MCF 10A (cell line): ENCODE measurements at regions of chr19 and their contacts with region 1.

Region 1: GRCh38 chr19:3970808-3971598 is at the start of gene DAPK3:
- DNase-seq: peak; percentile 99
- H3K4me3 Mint-ChIP-seq: peak within 1 kb of the TSS; percentile 72
- H3K27ac Mint-ChIP-seq: peak within 1 kb of the TSS; percentile 88
- H3K4me1 Mint-ChIP-seq: peaks cover 18% of the 10 kb centered on the region
- H3K27me3 Mint-ChIP-seq: no peaks in the 10 kb centered on the region
- CTCF ChIP-seq: no peak
- total RNA-seq, gene DAPK3: 60.9 and 61.2 TPM in 2 replicates

Region 2: DNA sequence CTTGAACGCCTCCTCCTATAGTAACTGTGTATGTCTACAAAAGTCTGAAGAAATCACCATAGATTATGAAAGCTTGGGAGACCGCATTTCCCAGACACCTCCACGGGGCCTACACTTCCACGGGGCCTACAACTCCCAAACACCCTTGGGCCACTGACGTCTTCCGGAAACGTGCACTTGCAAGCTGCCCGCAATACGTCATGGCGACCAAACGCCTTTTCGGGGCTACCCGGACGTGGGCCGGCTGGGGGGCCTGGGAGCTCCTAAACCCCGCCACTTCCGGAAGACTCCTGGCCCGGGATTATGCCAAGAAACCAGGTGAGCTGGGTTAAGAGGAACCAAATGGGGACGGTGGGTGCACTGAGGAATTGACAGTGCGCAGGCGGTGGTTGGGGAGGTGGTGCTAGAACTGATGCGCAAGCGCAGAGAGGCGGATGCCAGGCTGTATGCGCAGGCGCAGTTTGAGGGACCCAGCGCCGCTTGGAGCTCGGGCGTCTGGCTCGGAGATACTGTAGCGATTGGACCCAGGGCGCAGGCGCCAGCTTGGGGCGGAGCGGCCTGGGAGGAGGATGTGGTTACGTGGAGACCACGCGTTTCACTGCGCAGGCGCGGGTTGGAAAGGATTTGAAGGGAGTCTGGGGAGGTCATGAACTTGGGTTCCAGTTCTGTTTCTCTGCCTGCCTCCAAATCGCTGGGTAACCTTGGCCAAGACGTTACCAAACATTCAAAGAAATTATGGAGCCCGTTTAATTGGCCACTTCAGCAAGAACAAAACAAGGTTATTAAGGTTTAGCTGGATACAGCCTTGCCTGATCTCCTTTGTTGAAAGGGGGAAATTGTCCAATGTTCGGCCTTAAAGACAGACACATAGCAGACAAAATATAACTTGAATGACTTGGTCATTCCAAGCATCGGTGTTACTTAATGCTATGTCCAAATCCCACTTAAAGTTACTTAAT is 208.2 kb before region 1 on chr19 and contains the start of gene MRPL54:
- CTCF ChIA-PET with region 1: interaction called, 11 read pairs
- POLR2A ChIA-PET with region 1: interaction called, 33 read pairs
- intact Hi-C with region 1: no loop called
- DNase-seq: peak; percentile 100
- H3K4me3 Mint-ChIP-seq: peak within 1 kb of the TSS; percentile 92
- H3K27ac Mint-ChIP-seq: peak within 1 kb of the TSS; percentile 98
- H3K4me1 Mint-ChIP-seq: peaks cover 6% of the 10 kb centered on the region
- H3K27me3 Mint-ChIP-seq: no peaks in the 10 kb centered on the region
- CTCF ChIP-seq: no peak
- total RNA-seq, gene MRPL54: 85.0 and 85.7 TPM in 2 replicates

Region 3: DNA sequence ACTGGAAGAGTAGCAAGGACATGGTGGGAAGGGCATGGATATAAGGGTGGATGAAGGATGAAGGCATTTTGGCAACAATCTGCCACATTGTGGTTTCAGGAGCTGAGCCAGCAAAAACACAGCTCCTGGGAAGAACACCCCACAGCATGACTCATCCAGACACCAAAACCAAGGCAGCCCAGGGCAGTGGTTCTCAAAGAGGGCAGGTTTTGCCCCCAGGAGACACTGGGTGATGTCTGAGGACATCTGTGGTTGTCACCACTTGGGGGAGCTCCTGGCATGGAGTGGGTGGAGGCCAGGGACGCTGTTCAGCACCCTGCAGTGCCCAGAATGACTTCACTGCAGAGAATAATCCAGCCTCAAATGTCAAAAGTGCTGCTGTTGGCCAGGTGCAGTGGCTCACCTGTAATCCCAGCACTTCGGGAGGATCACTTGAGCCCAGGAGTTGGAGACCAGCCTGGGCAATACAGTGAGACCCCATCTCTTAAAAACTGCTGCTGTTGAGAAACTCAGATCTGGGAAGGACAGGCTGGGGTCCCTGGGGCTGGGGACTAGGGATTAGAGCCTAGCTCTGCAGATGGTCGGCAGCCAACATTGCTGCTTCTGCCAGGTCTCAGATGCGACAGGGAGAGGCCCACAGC is 118.3 kb before region 1 on chr19:
- CTCF ChIA-PET with region 1: interaction called, 14 read pairs
- POLR2A ChIA-PET with region 1: interaction called, 7 read pairs
- intact Hi-C with region 1: loop called (anchors 2 kb)
- DNase-seq: peak; percentile 99
- H3K4me3 Mint-ChIP-seq: no peak overlapping the region
- H3K27ac Mint-ChIP-seq: no peak overlapping the region
- H3K4me1 Mint-ChIP-seq: peaks cover 9% of the 10 kb centered on the region
- H3K27me3 Mint-ChIP-seq: peaks cover 53% of the 10 kb centered on the region
- CTCF ChIP-seq: peak; percentile 62

Region 4: GRCh38 chr19:3907626-3908265 is 63.3 kb before region 1 on chr19:
- CTCF ChIA-PET with region 1: no interaction called
- POLR2A ChIA-PET with region 1: no interaction called
- intact Hi-C with region 1: no loop called
- DNase-seq: no peak
- H3K4me3 Mint-ChIP-seq: no peak overlapping the region
- H3K27ac Mint-ChIP-seq: no peak overlapping the region
- H3K4me1 Mint-ChIP-seq: no peaks in the 10 kb centered on the region
- H3K27me3 Mint-ChIP-seq: peaks cover 15% of the 10 kb centered on the region
- CTCF ChIP-seq: no peak

Region 5: DNA sequence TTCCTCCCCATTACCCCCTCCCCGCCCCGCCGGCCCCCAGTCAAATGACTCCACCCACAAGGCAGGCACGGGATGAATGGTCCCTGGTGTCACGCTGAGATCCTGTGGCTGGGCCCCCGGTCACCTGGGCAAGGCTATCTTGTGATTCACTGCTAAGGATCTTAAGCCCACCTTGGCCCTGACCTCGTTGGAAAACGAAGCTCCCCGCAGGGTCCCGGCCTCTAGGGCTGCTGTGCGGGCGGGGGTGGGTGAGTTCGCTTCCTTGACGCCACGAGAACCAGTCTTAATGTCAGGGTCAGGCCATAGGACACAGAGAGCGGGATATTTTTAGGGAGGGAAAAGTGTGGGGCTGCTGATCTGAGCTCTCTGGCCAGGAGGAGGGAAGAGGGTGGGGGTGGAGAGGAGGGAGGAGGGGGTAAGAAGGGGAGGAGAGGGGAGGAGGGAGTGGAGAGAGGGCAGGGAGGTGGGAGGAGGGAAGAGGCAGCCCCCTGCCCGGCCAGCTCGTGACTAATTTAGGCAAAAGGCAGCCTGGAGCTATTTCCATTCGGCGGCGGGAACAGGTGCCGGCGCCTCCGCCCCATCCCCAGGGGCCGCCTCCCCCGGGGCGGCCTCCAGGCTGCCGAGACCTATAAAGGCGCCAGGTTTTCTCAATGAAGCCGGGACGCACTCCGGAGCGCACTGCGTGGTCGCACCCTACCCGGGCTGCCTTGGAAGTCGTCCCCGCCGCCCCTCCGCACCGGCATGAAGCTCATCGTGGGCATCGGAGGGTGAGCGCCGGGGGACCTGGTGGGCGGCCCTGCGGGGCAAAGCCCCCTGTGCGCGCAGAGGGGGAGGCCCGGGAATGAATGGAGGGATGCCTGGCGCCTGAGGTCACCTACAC is 37.8 kb before region 1 on chr19 and contains the start of gene NMRK2:
- CTCF ChIA-PET with region 1: no interaction called
- POLR2A ChIA-PET with region 1: no interaction called
- intact Hi-C with region 1: no loop called
- DNase-seq: no peak
- H3K4me3 Mint-ChIP-seq: no peak within 1 kb of the TSS
- H3K27ac Mint-ChIP-seq: no peak within 1 kb of the TSS
- H3K4me1 Mint-ChIP-seq: no peaks in the 10 kb centered on the region
- H3K27me3 Mint-ChIP-seq: peaks cover 12% of the 10 kb centered on the region
- CTCF ChIP-seq: no peak
- total RNA-seq, gene NMRK2: not detected in 2 replicates

Region 6: GRCh38 chr19:4023600-4024398 is 52.8 kb after region 1 on chr19:
- CTCF ChIA-PET with region 1: no interaction called
- POLR2A ChIA-PET with region 1: no interaction called
- intact Hi-C with region 1: no loop called
- DNase-seq: no peak
- H3K4me3 Mint-ChIP-seq: no peak overlapping the region
- H3K27ac Mint-ChIP-seq: no peak overlapping the region
- H3K4me1 Mint-ChIP-seq: no peaks in the 10 kb centered on the region
- H3K27me3 Mint-ChIP-seq: no peaks in the 10 kb centered on the region
- CTCF ChIP-seq: no peak

Region 7: GRCh38 chr19:4035582-4035981 is 64.6 kb after region 1 on chr19:
- CTCF ChIA-PET with region 1: no interaction called
- POLR2A ChIA-PET with region 1: no interaction called
- intact Hi-C with region 1: no loop called
- DNase-seq: no peak
- H3K4me3 Mint-ChIP-seq: no peak overlapping the region
- H3K27ac Mint-ChIP-seq: no peak overlapping the region
- H3K4me1 Mint-ChIP-seq: no peaks in the 10 kb centered on the region
- H3K27me3 Mint-ChIP-seq: no peaks in the 10 kb centered on the region
- CTCF ChIP-seq: no peak

Region 8: DNA sequence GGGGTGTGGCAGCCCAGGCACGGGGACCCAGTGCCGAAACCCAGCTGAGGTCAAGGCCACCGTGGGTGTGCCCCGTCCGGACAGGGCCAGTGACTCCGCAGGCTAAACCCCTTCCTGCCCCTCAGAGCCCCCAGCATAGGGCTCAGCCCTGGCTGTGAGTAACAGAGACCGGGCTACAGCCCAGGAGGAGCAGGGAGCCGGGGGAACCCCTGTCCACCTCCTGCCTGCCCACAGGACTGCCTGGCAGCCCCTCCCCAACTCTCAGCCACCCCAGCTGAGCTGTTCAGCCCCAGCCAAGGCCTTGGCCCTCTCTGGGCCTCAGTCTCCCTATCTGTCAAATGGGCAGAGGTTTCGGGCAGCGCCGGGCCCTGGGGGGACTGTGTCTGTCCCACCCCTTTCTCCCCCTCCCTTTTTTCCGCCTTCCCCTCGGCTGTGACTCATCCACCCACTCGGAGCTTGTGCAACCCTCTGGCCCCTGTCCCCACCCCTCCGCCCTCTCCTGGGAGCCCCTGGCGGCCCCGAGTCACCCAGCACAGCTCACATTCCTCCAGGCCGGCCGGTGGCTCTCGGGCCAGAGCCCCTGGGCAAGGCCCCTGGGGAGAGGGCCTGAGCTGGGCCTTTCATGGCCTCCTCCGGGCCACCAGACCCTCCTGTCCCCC is 87.2 kb after region 1 on chr19:
- CTCF ChIA-PET with region 1: interaction called, 3 read pairs
- POLR2A ChIA-PET with region 1: interaction called, 11 read pairs
- intact Hi-C with region 1: no loop called
- DNase-seq: peak; percentile 96
- H3K4me3 Mint-ChIP-seq: peak overlapping the region; percentile 68
- H3K27ac Mint-ChIP-seq: peak overlapping the region; percentile 70
- H3K4me1 Mint-ChIP-seq: peaks cover 18% of the 10 kb centered on the region
- H3K27me3 Mint-ChIP-seq: no peaks in the 10 kb centered on the region
- CTCF ChIP-seq: peak; percentile 21